ENCODE measurements at regions of chr4 and their contacts with region 1.

Region 1: GRCh38 chr4:58138786-58139668 is 1028.8 kb upstream of the IGFBP7 start:
- DNase-seq: no peak
- H3K4me3 ChIP-seq: no peak overlapping the region
- H3K27ac ChIP-seq: no peak overlapping the region
- H3K4me1 ChIP-seq: no peaks in the 10 kb centered on the region
- H3K27me3 ChIP-seq: no peaks in the 10 kb centered on the region
- CTCF ChIP-seq: no peak

Region 2: GRCh38 chr4:58070726-58071125 is 68.3 kb before region 1 on chr4:
- CTCF ChIA-PET with region 1: no interaction called
- dilution Hi-C with region 1: loop called (anchors 10 kb)
- in situ Hi-C with region 1: no loop called
- intact Hi-C with region 1: no loop called
- DNase-seq: no peak
- H3K4me3 ChIP-seq: no peak overlapping the region
- H3K27ac ChIP-seq: no peak overlapping the region
- H3K4me1 ChIP-seq: no peaks in the 10 kb centered on the region
- H3K27me3 ChIP-seq: no peaks in the 10 kb centered on the region
- CTCF ChIP-seq: no peak